ENCODE measurements at regions of chr7 and their contacts with region 1.

Region 1: DNA sequence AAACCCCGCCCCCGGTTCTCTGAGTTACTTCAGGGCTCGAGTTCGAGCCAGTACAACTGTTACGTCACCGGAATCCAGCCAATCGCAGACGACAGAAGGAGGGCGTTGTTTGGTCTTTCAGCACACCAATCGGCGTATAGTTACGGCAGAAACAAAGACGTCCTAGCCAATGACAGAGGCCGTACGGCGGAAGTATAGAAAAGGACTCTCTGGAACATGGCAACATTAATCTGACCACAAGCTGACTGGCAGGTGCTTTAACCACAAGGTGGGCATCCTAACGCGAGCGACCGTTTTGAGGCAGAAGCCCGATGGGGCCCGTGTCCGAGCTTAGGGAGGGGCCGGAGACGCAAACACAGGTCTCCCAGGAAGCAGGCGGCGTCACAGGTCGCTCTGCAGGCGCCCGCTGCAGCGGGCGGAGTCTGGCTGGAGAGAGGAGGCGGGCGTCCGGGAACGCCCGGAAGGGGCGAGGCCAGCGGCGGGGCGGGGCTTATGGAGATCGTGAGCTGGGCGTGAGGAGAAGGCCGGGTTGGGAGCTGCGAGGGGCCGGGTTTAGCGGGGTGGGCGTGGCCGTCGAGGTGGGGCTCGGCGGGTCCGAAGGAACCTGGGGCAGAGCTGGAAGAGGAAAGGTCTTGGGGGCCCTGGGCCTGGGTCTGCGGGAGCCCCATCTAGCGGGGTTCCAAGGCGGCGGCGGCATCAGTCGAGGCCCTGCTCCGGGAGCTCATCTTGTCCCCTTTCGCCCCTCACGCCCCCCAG is at the start of gene MOSPD3:
- DNase-seq: peak; percentile 98 to 99
- ATAC-seq: peak; percentile 99 to 100
- H3K4me3 ChIP-seq: peak within 1 kb of the TSS; percentile 69 to 91 (median 76)
- H3K27ac ChIP-seq: peak within 1 kb of the TSS; percentile 90 to 99 (median 96)
- H3K4me1 ChIP-seq: peaks cover 0 to 14% of the 10 kb centered on the region in 2 donors
- H3K27me3 ChIP-seq: no peaks in the 10 kb centered on the region
- CTCF ChIP-seq: no peak
- POLR2A ChIP-seq: peak; percentile 74 to 75
- total RNA-seq, gene MOSPD3: 3.5 to 9.1 (median 4.6) TPM

Region 2: DNA sequence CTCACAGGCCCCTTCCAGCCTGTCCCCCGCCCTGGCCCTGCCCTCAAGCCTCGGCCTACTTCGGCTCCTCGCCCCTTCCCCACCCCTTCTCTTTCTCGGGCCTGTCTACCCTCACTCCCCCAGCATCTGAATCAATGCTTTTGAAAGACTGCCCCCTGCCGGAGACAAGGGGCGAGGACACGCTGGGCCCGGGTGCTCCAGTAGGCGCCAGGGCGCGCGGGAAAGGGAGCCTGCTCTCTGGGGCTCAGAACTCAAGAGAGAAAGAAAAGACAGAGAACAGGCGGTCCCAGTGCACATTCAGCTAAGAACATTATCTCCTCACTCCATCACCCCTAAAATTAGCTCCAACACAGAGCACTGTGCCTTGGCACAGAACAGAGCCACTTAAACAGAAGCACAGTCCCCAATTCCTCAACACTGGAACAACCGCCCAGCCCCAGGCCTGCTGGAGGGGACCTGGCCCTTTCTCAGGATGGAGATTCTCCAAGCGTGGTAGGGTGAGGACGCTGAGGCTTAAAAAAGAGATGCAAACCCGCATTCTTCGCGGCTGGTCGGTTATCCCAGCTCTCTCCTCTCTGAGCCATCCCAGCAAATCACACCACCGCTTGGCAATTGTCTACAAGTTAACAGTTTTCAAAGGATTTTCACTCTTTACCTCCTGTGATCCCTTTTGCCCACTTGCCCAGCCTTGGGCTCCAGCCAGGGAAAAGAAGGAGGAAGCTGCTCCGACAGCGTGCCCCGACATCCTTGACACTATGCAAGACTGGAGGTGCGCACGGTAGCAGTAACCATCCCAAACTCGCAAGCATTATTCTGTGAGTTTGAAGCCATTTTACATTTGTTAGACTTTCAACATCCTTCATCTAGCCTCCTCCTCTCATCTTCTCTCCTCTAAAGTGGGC is 79.8 kb after region 1 on chr7:
- in situ Hi-C with region 1: no loop called
- intact Hi-C with region 1: loop called (anchors 5 kb)
- DNase-seq: peak; percentile 59 to 68
- ATAC-seq: peak; percentile 55 to 73
- H3K4me3 ChIP-seq: peak overlapping the region; percentile 37 to 89 (median 71)
- H3K27ac ChIP-seq: peak overlapping the region; percentile 69 to 84 (median 77)
- H3K4me1 ChIP-seq: peaks cover 44 to 48% of the 10 kb centered on the region in 2 donors
- H3K27me3 ChIP-seq: no peaks in the 10 kb centered on the region
- CTCF ChIP-seq: peak; percentile 78 to 93 (median 89)
- POLR2A ChIP-seq: no peak

Region 3: DNA sequence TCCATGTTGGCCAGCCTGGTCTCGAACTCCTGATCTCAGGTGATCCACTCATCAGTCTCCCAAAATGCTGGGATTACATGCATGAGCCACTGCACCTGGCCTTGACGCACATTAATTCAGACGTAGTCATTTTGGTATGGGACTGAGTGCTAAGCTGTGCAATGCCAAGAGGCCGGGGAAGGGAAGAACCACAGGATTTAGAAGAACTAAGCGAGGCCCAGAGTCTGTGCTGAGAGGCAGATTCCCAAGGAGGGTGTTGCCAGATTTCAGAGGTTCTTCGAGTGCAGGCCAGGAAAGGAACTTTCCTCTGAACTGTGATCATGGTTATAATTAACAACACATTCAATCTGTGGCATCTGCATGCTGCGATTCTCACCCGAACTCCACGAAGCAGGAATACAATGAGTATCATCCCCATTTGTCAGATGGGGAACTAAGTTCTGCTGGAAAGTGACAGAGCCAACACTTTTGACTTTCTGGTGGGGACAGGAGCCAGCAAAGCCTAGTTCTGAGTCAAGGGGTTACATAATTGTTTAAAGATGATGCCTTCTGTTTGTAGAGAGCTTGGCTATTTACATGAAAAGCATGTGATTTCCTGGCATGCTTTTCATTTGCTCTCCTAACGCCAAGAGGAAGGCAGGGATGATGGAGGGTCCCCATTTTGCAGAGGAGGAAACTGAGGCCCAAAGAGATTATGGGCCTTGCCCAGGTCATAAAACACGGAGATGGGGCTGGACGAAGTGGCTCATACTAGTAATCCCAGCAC is 115.0 kb after region 1 on chr7:
- in situ Hi-C with region 1: no loop called
- intact Hi-C with region 1: no loop called
- DNase-seq: no peak
- ATAC-seq: no peak
- H3K4me3 ChIP-seq: no peak overlapping the region
- H3K27ac ChIP-seq: no peak overlapping the region
- H3K4me1 ChIP-seq: no peaks in the 10 kb centered on the region
- H3K27me3 ChIP-seq: peaks cover 0 to 7% (median 4%) of the 10 kb centered on the region in 3 donors
- CTCF ChIP-seq: no peak
- POLR2A ChIP-seq: no peak

Region 4: GRCh38 chr7:100867040-100867775 is 255.1 kb after region 1 on chr7 and contains the start of gene TRIP6:
- in situ Hi-C with region 1: no loop called
- intact Hi-C with region 1: loop called (anchors 10 kb)
- DNase-seq: peak; percentile 72 to 76
- ATAC-seq: peak; percentile 63 to 77
- H3K4me3 ChIP-seq: peak within 1 kb of the TSS; percentile 57 to 66 (median 63)
- H3K27ac ChIP-seq: peak within 1 kb of the TSS; percentile 80 to 84 (median 83)
- H3K4me1 ChIP-seq: peaks cover 3 to 18% of the 10 kb centered on the region in 2 donors
- H3K27me3 ChIP-seq: peaks cover 3 to 7% (median 7%) of the 10 kb centered on the region in 3 donors
- CTCF ChIP-seq: no peak
- POLR2A ChIP-seq: peak in 1 of 2 donors; percentile 10
- total RNA-seq, gene TRIP6: 4.6 to 9.1 (median 7.3) TPM

Region 5: GRCh38 chr7:101507791-101508252 is 895.7 kb after region 1 on chr7:
- in situ Hi-C with region 1: no loop called
- intact Hi-C with region 1: no loop called
- DNase-seq: no peak
- ATAC-seq: no peak
- H3K4me3 ChIP-seq: no peak overlapping the region
- H3K27ac ChIP-seq: no peak overlapping the region
- H3K4me1 ChIP-seq: no peaks in the 10 kb centered on the region
- H3K27me3 ChIP-seq: peaks cover 4 to 21% (median 20%) of the 10 kb centered on the region in 3 donors
- CTCF ChIP-seq: no peak
- POLR2A ChIP-seq: no peak